Activated CD4-positive, alpha-beta memory T cell treated with anti-CD3 and anti-CD28 coated beads for 36 hours (primary cell): ENCODE measurements at regions of chr1 and their contacts with region 1.

Region 1: DNA sequence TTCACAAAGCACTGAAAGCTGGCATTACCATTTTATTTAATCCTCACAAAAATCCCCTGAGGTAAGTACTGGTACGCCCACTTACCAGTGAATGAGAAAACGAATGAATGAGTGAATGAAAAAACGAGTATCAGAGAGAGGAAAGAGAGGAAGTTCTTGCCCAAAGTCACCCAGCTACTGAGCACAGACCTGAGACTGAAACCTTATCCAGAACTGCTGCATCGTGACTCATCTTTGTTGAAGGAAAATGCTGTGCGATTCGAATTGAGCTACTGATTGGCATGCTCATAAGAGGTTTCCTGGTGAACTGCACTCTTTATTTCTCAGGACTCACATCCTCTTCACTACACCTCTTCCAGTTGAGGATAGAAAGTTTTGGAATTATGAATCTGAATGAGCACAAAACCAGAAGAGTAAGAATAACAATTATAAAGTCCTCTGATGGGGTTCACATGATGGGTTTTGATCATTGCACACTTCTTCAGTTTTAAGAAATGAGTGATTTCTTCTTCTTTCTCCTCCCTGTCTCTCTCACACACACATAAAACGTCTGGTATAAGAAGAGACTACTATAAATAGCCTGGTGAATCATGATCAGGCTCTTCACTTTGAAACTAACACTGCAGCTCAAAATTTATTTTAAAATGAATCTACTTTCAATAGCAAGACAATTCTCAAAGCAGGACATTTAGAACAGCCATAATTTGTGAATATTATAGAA is 32.1 kb downstream of the IL12RB2 start:
- DNase-seq: peak; percentile 66
- H3K4me3 Mint-ChIP-seq: peak overlapping the region; percentile 1
- H3K27ac Mint-ChIP-seq: peak overlapping the region; percentile 97
- H3K4me1 Mint-ChIP-seq: peaks cover 77% of the 10 kb centered on the region
- H3K27me3 Mint-ChIP-seq: no peaks in the 10 kb centered on the region

Region 2: DNA sequence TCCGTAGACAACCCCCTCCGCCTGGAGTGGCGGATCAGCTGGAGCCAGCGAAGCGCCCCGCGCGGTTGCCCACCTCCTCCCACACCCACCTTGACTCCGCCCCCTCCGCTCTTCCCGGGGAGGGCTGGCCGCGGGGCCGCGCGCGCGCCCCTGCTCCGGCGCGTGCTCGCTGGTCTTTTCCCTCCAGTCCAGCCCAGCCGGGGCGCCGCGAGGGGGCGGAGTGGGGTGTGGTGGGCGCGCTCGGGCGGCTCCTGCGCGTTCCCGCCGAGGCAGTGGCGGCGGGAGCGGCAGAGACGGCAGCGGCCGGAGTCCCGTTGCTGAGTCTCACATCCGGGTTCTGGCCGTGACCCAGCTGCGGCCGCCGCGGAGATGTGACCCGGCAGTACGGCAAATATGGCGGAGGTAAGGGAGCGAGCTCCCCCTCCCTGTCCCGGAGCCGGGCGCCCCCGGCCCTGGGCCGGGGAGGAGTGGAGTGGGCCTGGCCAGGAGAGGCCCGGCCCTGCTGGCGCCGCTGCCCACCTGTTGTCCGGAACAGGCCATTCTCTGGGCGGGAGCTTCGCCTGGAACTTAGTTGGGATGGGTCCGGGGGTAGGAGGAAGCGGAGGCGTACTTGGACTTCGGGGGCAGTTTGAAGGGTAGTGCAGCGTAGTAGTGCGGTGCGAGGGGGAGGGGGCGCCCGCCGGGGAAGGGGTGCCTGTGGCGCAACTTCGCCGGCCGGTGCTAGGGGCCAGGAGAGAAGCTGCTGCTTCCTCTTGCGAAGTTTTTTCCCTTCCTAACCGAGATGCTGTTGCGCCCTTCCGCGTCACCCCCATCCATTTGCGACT is 409.6 kb before region 1 on chr1:
- CTCF ChIA-PET with region 1: no interaction called
- POLR2A ChIA-PET with region 1: no interaction called
- intact Hi-C with region 1: loop called (anchors 5 kb)
- DNase-seq: peak; percentile 96
- H3K4me3 Mint-ChIP-seq: peak overlapping the region; percentile 90
- H3K27ac Mint-ChIP-seq: peak overlapping the region; percentile 96
- H3K4me1 Mint-ChIP-seq: peaks cover 57% of the 10 kb centered on the region
- H3K27me3 Mint-ChIP-seq: no peaks in the 10 kb centered on the region

Region 3: DNA sequence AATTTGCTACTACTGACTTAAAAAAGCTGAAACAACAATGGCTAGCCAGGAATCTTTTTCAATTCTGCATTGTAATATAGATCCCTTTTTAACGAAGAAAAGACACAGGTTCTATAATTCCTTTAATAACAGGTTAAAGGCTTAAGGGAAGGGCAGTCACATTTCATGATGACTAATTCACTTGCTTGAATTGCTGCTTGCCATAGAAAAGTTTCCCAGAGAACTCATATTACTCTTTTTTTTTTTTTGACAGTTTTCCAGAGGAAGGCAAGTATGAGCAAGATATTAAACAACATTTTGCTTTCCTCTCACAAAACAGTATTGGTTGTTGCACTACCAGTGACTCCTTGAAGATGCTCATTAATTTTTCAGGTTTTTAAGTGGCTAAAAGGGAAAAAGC is 112.6 kb before region 1 on chr1:
- CTCF ChIA-PET with region 1: no interaction called
- POLR2A ChIA-PET with region 1: no interaction called
- intact Hi-C with region 1: loop called (anchors 5 kb)
- DNase-seq: no peak
- H3K4me3 Mint-ChIP-seq: no peak overlapping the region
- H3K27ac Mint-ChIP-seq: no peak overlapping the region
- H3K4me1 Mint-ChIP-seq: peaks cover 6% of the 10 kb centered on the region
- H3K27me3 Mint-ChIP-seq: peaks cover 1% of the 10 kb centered on the region

Region 4: DNA sequence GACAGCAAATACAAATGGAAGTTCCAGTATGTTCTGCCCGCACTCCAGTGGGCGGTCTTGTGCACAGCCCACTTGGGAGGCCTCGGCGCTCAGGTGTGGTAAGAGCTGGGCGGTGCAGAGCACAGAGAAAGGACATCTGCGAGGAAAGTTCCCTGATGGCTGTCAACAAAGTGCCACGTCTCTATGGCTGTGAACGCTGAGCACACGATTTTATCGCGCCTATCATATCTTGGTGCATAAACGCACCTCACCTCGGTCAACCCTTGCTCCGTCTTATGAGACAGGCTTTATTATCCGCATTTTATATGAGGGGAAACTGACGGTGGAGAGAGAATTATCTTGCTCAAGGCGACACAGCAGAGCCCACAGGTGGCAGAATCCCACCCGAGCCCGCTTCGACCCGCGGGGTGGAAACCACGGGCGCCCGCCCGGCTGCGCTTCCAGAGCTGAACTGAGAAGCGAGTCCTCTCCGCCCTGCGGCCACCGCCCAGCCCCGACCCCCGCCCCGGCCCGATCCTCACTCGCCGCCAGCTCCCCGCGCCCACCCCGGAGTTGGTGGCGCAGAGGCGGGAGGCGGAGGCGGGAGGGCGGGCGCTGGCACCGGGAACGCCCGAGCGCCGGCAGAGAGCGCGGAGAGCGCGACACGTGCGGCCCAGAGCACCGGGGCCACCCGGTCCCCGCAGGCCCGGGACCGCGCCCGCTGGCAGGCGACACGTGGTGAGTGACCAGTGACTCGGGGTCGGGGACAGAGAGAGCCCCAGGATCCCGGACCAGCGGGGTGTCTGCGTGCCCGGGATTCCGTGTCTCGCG is 32.3 kb before region 1 on chr1 and contains the start of gene IL12RB2:
- CTCF ChIA-PET with region 1: no interaction called
- POLR2A ChIA-PET with region 1: interaction called, 21 read pairs
- intact Hi-C with region 1: loop called (anchors 1 kb)
- DNase-seq: peak; percentile 75
- H3K4me3 Mint-ChIP-seq: peak within 1 kb of the TSS; percentile 95
- H3K27ac Mint-ChIP-seq: peak within 1 kb of the TSS; percentile 96
- H3K4me1 Mint-ChIP-seq: peaks cover 52% of the 10 kb centered on the region
- H3K27me3 Mint-ChIP-seq: peaks cover 2% of the 10 kb centered on the region
- total RNA-seq, gene IL12RB2: 86.9 to 90.7 TPM

Region 5: GRCh38 chr1:67404212-67404620 is 64.4 kb after region 1 on chr1:
- CTCF ChIA-PET with region 1: no interaction called
- POLR2A ChIA-PET with region 1: interaction called, 4 read pairs
- intact Hi-C with region 1: loop called (anchors 1 kb)
- DNase-seq: no peak
- H3K4me3 Mint-ChIP-seq: no peak overlapping the region
- H3K27ac Mint-ChIP-seq: no peak overlapping the region
- H3K4me1 Mint-ChIP-seq: peaks cover 14% of the 10 kb centered on the region
- H3K27me3 Mint-ChIP-seq: no peaks in the 10 kb centered on the region

Region 6: GRCh38 chr1:67500413-67500959 is 160.7 kb after region 1 on chr1:
- CTCF ChIA-PET with region 1: interaction called, 3 read pairs
- POLR2A ChIA-PET with region 1: no interaction called
- intact Hi-C with region 1: loop called (anchors 5 kb)
- DNase-seq: peak; percentile 93
- H3K4me3 Mint-ChIP-seq: no peak overlapping the region
- H3K27ac Mint-ChIP-seq: no peak overlapping the region
- H3K4me1 Mint-ChIP-seq: peaks cover 2% of the 10 kb centered on the region
- H3K27me3 Mint-ChIP-seq: peaks cover 6% of the 10 kb centered on the region